Activated B cell treated with CpG ODN at 0.5 μM for 24 hours (primary cell): ENCODE measurements at regions of chr10 and their contacts with region 1.

Region 1: GRCh38 chr10:83262434-83262833 is 876.9 kb upstream of the GHITM start:
- DNase-seq: no peak
- ATAC-seq: no peak
- H3K4me3 Mint-ChIP-seq: no peak overlapping the region
- H3K27ac Mint-ChIP-seq: no peak overlapping the region
- H3K4me1 Mint-ChIP-seq: no peaks in the 10 kb centered on the region
- H3K27me3 Mint-ChIP-seq: no peaks in the 10 kb centered on the region
- CTCF ChIP-seq: no peak

Region 2: DNA sequence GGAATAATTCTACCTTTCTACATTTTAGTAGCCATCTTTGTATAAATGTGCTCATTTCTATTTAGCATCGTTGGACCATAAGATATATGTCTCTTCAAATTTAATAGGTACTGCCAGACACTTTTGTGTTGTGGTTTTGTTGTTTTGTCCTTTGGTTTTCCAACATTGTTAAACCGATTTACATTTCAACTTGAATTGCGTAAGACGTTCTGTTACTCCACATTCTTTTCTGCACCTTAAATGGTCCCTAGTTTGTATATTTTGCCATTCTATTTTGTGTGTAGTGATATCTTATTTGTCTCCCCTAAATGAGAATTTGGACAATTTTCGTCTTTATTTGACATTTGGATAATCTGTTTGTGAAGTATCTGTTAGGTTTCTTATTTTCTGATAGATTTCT is 371.9 kb before region 1 on chr10:
- CTCF ChIA-PET with region 1: no interaction called
- POLR2A ChIA-PET with region 1: no interaction called
- intact Hi-C with region 1: loop called (anchors 5 kb)
- DNase-seq: no peak
- ATAC-seq: no peak
- H3K4me3 Mint-ChIP-seq: no peak overlapping the region
- H3K27ac Mint-ChIP-seq: no peak overlapping the region
- H3K4me1 Mint-ChIP-seq: no peaks in the 10 kb centered on the region
- H3K27me3 Mint-ChIP-seq: no peaks in the 10 kb centered on the region
- CTCF ChIP-seq: no peak

Region 3: GRCh38 chr10:83283151-83283550 is 20.7 kb after region 1 on chr10:
- CTCF ChIA-PET with region 1: no interaction called
- POLR2A ChIA-PET with region 1: no interaction called
- intact Hi-C with region 1: no loop called
- DNase-seq: no peak
- ATAC-seq: no peak
- H3K4me3 Mint-ChIP-seq: no peak overlapping the region
- H3K27ac Mint-ChIP-seq: no peak overlapping the region
- H3K4me1 Mint-ChIP-seq: no peaks in the 10 kb centered on the region
- H3K27me3 Mint-ChIP-seq: no peaks in the 10 kb centered on the region
- CTCF ChIP-seq: no peak